ENCODE measurements at regions of chr14 and their contacts with region 1.

Region 1: DNA sequence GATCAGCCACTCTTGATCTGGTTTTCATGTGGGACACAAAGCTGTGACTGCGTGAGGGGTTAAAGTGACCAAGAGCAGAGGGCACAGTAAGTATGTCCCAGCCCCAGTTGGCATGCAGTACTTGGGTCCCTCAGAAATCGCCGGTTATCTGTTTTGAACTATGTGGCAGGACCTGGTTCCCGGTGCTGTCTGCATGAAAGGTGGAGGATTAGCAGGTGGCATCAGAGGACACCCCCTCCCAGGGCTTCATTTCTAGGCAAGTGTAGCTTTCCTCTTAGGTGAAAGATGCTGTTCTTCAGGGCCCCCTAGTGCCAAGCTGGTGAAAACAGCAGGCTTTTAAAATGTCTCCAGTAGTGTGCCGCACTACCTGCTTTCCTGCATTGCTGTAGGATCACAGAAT is 57.1 kb downstream of the ATG14 start:
- DNase-seq: peak; percentile 53 to 84
- H3K4me3 ChIP-seq: no peak overlapping the region
- H3K27ac ChIP-seq: no peak overlapping the region
- H3K4me1 ChIP-seq: peaks cover 0 to 15% (median 10%) of the 10 kb centered on the region in 4 donors
- H3K27me3 ChIP-seq: no peaks in the 10 kb centered on the region
- CTCF ChIP-seq: peak in 4 of 7 experiments; percentile 43 to 61 (median 55)
- EP300 ChIP-seq: no peak
- POLR2A ChIP-seq: no peak

Region 2: GRCh38 chr14:55265197-55265596 is 89.3 kb before region 1 on chr14:
- intact Hi-C with region 1: loop called (anchors 10 kb)
- DNase-seq: no peak
- H3K4me3 ChIP-seq: no peak overlapping the region
- H3K27ac ChIP-seq: no peak overlapping the region
- H3K4me1 ChIP-seq: peaks cover 0 to 7% (median 3%) of the 10 kb centered on the region in 4 donors
- H3K27me3 ChIP-seq: no peaks in the 10 kb centered on the region
- CTCF ChIP-seq: no peak
- EP300 ChIP-seq: no peak
- POLR2A ChIP-seq: no peak

Region 3: DNA sequence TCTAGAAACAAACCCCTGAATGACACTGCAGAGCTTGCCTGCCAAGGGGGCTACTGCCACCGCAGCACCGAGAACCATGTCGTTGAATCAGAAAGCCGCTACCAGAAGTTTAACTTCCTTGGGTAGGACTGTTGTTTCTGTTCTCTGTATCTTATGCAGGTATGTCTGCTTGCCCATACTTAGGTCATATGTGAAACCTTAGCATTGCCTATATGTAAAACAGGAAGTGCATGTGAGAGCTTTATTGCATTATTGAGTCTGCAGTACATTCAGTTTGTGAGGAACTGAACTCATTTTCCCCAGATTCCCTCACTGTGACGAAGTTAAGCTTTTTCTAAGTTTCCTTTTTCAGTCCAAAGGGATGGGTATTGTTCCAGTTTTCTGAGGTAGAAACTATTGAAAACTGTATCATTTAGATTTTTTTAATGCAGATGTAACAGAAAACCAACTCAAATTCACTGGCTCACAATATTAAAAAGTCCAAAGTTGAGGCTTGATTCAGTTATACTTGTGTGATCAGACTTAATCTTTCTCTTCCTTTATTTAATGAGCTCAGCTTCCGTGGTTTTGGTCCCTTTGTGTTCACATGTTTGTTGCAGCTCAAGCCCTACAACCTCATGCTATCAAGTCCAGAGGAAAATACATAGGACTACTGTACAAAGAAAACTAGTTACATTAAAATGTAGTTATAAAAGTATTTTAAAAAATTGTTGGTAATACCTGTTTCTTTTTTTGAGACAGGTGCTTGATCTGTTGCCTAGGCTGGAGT is 76.3 kb before region 1 on chr14:
- intact Hi-C with region 1: no loop called
- DNase-seq: peak in 1 of 2 donors; percentile 31
- H3K4me3 ChIP-seq: no peak overlapping the region
- H3K27ac ChIP-seq: peak overlapping the region in 3 of 5 donors; percentile 9 to 52 (median 37)
- H3K4me1 ChIP-seq: peaks cover 30 to 72% (median 57%) of the 10 kb centered on the region in 4 donors
- H3K27me3 ChIP-seq: no peaks in the 10 kb centered on the region
- CTCF ChIP-seq: no peak
- EP300 ChIP-seq: no peak
- POLR2A ChIP-seq: no peak